Astrocyte of the cerebellum (primary cell): ENCODE measurements at regions of chr11 and their contacts with region 1.

Region 1: DNA sequence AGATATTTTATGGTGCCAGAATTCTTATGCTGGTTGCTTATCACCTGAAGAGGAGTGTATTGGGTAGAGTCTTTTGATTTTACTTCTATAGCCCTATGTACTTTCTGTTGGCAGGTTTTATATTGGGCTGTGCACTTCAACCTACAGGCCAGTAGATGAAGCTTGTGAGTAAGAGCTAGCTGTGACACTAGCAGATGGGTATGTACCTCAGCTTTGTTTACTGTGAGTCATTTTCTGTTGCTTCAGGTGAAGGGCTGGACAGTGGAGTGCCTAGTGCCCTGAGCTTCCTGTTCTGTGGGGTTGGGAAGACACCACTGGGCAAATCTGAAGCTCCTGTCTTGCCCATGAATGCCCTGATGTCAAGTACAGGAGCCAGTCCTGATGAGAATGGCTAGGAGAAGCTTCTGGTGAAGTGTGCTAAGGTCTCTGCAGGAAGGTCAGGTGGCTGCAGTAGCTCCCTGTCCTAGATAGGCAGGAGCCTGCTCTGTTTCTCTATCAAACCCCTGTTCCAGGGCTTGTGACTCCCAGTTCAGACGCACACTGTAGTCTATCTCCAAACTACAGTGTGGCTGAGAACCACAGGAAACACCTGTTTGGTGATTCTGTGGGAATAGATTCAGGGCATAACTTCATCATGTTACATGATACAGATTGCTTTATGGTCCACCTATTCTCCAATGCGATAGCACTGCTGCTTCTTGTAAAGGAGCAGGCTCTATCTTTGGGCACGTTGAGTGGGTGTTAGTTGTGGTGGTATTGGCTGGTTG is 755.7 kb downstream of the KCNA4 start:
- DNase-seq: no peak
- H3K4me3 ChIP-seq: no peak overlapping the region
- CTCF ChIP-seq: no peak

Region 2: GRCh38 chr11:29129850-29130249 is 131.3 kb before region 1 on chr11:
- in situ Hi-C with region 1: no loop called
- DNase-seq: no peak
- H3K4me3 ChIP-seq: no peak overlapping the region
- CTCF ChIP-seq: no peak

Region 3: GRCh38 chr11:29184939-29185890 is 75.9 kb before region 1 on chr11:
- in situ Hi-C with region 1: loop called (anchors 5 kb)
- DNase-seq: peak; percentile 92
- H3K4me3 ChIP-seq: no peak overlapping the region
- CTCF ChIP-seq: no peak